HepG2 (cell line): ENCODE measurements at regions of chr17 and their contacts with region 1.

Region 1: DNA sequence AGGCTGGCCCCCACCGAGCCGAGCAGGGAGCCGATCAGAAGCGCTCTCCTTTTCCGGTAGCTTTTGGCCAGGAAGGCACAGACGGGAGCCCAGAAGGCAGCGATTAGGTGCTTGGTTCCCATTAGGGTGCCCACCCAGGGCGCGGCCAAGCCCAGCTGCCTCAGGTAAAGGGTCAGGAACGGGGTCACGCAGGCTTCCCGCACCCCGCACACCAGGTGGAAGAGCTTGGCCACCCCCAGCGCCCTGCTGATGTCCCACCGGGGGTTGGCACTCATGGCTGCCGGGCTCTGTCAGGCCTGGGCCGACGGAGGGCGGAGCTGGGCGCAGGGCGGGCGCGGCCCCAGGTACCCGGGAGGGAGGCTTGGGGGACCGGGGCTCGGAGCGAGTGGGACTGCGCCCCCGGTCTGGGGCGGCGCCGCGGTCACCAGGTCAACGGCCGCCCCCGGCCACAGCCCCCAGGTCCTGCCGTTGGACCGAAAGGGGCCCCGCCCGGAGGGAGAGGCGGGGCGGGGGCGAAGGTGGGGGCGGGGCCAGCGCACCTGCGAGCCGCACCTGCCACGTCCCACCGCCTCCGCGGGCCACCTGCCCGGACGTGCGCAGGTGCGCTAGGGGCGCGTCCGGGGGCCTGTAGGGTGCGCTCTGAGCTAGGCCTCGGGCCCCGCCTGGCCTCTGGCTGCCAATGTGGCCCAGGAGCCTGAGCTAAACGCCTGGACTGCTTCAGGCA is at the start of gene MFSD6L:
- DNase-seq: no peak
- ATAC-seq: no peak
- H3K4me3 ChIP-seq: no peak within 1 kb of the TSS
- H3K27ac ChIP-seq: no peak within 1 kb of the TSS
- H3K4me1 ChIP-seq: no peaks in the 10 kb centered on the region
- H3K27me3 ChIP-seq: peaks cover 4 to 53% of the 10 kb centered on the region in 2 experiments
- CTCF ChIP-seq: no peak
- EP300 ChIP-seq: no peak
- POLR2A ChIP-seq: no peak
- RAD21 ChIP-seq: no peak
- total RNA-seq, gene MFSD6L: not detected in 2 replicates

Region 2: DNA sequence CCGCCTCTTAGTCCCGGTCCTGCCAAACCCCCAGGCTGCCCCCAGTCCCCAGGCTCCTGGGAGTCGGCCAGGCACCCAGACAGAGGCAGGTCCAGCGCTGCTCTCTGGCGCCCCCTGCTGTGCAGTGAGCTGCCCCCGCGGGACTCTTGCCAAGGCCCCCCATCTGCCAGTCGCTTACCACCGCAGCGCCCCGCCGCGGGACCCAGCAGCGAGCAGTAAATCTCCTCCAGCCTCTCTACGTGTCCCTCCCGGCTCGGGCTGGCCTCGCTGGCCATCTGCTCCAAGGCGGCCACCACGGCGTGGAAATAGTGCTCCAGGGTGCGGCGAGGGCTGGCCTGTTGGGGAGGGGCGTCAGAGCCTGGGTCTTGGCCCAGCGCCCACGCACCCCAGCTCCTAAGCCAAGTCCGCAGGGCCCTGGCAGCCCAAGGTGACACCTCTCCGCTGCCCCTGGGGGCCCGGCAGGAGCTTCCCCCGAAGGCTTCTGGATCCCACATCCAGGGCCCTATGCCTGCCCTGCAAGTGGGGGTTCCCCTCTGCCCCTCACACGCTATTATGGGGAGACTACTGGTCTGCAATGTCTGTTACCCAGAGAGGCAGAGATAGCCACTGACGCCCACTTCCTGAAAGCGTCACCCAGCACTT is 33.8 kb after region 1 on chr17:
- CTCF ChIA-PET with region 1: no interaction called
- POLR2A ChIA-PET with region 1: no interaction called
- in situ Hi-C with region 1: no loop called
- intact Hi-C with region 1: no loop called
- DNase-seq: no peak
- ATAC-seq: peak; percentile 64
- H3K4me3 ChIP-seq: no peak overlapping the region
- H3K27ac ChIP-seq: no peak overlapping the region
- H3K4me1 ChIP-seq: no peaks in the 10 kb centered on the region
- H3K27me3 ChIP-seq: peaks cover 3 to 13% of the 10 kb centered on the region in 2 experiments; a peak in 3 of 5 replicates
- CTCF ChIP-seq: peak; percentile 63
- EP300 ChIP-seq: no peak
- POLR2A ChIP-seq: no peak
- RAD21 ChIP-seq: no peak

Region 3: DNA sequence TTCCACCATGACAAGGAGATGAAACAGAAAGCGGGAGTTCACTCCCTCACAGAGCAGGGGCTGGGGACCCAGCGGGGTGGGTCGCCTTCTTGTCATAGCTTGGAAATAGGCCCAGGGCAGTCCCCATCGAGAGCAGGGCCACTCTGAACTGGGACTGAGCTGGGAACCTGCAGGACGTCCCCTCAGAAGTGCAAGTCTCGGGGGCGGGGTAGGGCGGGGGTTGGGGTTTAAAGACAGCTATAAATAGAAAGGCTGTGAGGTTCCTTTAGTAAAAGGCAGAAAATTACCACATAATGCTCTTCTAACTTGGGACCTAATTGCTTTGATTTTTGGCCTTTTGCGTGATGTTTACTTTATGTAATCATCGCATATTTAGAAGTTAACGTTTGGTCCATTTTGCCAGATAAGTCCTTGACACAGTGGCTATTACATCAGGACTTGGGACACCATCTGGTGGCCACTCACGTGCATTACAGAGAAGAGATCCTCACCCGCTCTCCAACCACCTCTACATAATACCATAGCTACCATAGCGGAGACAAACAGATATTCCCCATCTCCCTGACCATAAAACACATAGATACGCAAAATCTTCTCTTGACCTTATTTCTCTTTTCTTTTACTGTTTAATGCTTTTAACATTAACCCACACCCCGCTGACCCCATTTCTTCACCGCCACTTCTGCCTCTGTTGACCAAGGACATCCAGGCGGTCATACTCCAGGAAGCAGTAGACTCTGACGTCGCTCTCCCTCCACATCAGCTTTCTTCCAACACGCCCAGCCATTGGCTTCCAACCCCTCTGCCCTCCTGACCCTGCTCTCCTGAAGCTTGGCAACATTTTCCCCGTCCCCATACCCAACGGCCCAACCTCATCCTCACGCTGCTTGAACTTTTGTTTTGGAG is 95.9 kb after region 1 on chr17:
- CTCF ChIA-PET with region 1: interaction called, 4 read pairs
- POLR2A ChIA-PET with region 1: no interaction called
- in situ Hi-C with region 1: loop called (anchors 5 kb)
- intact Hi-C with region 1: loop called (anchors 5 kb)
- DNase-seq: peak; percentile 52
- ATAC-seq: peak; percentile 87
- H3K4me3 ChIP-seq: no peak overlapping the region
- H3K27ac ChIP-seq: no peak overlapping the region
- H3K4me1 ChIP-seq: no peaks in the 10 kb centered on the region
- H3K27me3 ChIP-seq: peaks cover 10 to 66% of the 10 kb centered on the region in 2 experiments; a peak in 4 of 5 replicates
- CTCF ChIP-seq: peak; percentile 82
- EP300 ChIP-seq: no peak
- POLR2A ChIP-seq: no peak
- RAD21 ChIP-seq: peak; percentile 51; the same call in 1 of the 2 replicates

Region 4: GRCh38 chr17:9414471-9414870 is 615.5 kb after region 1 on chr17:
- CTCF ChIA-PET with region 1: no interaction called
- POLR2A ChIA-PET with region 1: no interaction called
- in situ Hi-C with region 1: no loop called
- intact Hi-C with region 1: no loop called
- DNase-seq: no peak
- ATAC-seq: no peak
- H3K4me3 ChIP-seq: no peak overlapping the region
- H3K27ac ChIP-seq: no peak overlapping the region
- H3K4me1 ChIP-seq: no peaks in the 10 kb centered on the region
- H3K27me3 ChIP-seq: no peaks in the 10 kb centered on the region
- CTCF ChIP-seq: no peak
- EP300 ChIP-seq: no peak
- POLR2A ChIP-seq: no peak
- RAD21 ChIP-seq: no peak